Cardiac septum (tissue), 1 donor: ENCODE measurements at regions of chr12 and their contacts with region 1.

Region 1: DNA sequence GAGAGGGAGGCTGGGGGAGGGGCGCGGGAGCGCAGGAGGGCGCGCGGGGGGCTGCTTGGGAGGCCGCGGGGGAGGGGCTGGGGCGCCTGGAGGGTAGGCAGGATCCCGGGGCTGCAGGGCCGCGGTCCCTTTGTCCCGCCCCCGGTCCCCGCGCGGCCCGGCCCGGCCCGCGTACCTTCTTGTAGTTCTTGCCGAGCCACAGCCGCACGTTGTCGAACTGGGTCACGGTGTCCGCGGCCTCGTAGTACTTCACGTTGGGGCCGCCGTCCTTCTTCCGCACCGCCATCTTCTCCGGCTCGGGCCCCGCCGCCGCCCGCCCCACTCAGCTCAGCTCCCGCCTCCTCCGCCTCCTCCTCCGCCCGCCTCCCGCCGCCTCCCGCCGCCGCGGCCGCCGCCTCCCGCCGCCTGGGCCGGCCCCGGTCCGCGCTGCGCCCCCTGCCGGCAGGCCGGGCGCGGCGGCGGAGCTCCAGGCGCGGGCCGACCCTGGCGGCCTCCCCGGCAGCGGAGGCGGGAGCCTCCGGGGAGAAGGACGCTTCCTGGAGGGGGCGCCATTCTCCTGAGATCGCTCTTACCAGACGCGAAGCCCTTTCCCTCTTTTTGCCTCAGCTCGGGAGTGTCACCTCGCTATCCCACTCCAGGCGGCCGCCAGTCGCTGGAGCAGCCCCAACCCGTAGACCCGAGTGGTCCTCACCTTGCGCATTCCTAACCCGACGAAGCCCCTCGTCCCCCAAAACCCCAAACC is at the start of gene SMARCC2:
- DNase-seq: peak; percentile 94
- total RNA-seq, gene SMARCC2: 71.5 TPM

Region 2: GRCh38 chr12:56158029-56158925 is 31.1 kb before region 1 on chr12 and contains the start of gene MYL6:
- intact Hi-C with region 1: loop called (anchors 2 kb)
- DNase-seq: peak; percentile 99
- total RNA-seq, gene MYL6: 792 TPM

Region 3: GRCh38 chr12:56224102-56224701 is 34.9 kb after region 1 on chr12 and contains the start of gene NABP2:
- intact Hi-C with region 1: loop called (anchors 1 kb)
- DNase-seq: peak; percentile 99
- total RNA-seq, gene NABP2: 19.6 TPM

Region 4: DNA sequence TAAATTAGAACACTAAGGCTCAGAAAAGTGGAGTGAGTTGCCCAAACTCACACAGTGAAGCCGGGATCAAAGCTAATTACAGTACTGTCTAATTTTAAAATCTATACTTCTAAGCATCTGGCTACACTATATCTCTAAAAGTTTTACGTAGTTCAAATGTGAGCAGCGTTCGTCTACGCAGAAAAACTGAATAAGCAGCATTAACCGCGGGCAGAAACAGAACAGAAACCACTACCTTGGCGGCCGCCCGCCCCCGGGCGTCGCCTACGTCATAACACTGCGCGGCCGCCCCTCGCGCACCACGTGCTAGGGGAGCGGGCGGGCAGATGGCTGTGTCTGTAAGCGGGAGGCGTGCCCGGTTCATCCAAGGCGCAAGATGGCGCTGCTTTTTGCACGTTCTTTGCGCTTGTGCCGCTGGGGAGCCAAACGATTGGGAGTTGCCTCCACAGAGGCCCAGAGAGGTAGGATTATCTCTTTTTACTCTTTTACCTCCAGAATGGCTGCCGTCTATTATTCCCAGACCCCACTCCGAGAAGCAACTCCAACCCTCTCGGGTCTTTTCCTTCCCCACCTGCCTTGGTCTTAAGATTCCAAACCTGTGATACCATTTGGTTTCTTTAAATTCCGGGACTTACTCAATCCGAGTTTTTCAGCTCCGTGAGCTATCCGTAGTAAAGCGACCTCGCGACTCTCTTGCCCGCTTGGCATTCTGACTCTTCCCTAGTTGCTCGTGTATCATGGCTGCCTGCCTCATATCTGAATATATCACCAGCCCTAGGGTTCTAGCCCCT is 279.1 kb after region 1 on chr12 and contains the start of gene SPRYD4:
- intact Hi-C with region 1: loop called (anchors 5 kb)
- DNase-seq: peak; percentile 97
- total RNA-seq, gene SPRYD4: 3.3 TPM